Stomach (tissue), 19 donors: ENCODE measurements at regions of chr5 and their contacts with region 1.

Region 1: GRCh38 chr5:135657536-135658310 is 78.9 kb upstream of the CXCL14 start:
- DNase-seq: no peak
- H3K4me3 ChIP-seq: no peak overlapping the region
- H3K27ac ChIP-seq: no peak overlapping the region
- H3K4me1 ChIP-seq: no peaks in the 10 kb centered on the region
- H3K27me3 ChIP-seq: no peaks in the 10 kb centered on the region
- CTCF ChIP-seq: no peak
- EP300 ChIP-seq: no peak
- POLR2A ChIP-seq: no peak

Region 2: GRCh38 chr5:135582099-135582781 is 75.5 kb before region 1 on chr5:
- intact Hi-C with region 1: loop called (anchors 2 kb)
- DNase-seq: no peak
- H3K4me3 ChIP-seq: no peak overlapping the region
- H3K27ac ChIP-seq: no peak overlapping the region
- H3K4me1 ChIP-seq: peaks cover 0 to 14% (median 6%) of the 10 kb centered on the region in 4 donors
- H3K27me3 ChIP-seq: peaks cover 4 to 69% (median 34%) of the 10 kb centered on the region in 3 donors
- CTCF ChIP-seq: no peak
- EP300 ChIP-seq: no peak
- POLR2A ChIP-seq: no peak

Region 3: DNA sequence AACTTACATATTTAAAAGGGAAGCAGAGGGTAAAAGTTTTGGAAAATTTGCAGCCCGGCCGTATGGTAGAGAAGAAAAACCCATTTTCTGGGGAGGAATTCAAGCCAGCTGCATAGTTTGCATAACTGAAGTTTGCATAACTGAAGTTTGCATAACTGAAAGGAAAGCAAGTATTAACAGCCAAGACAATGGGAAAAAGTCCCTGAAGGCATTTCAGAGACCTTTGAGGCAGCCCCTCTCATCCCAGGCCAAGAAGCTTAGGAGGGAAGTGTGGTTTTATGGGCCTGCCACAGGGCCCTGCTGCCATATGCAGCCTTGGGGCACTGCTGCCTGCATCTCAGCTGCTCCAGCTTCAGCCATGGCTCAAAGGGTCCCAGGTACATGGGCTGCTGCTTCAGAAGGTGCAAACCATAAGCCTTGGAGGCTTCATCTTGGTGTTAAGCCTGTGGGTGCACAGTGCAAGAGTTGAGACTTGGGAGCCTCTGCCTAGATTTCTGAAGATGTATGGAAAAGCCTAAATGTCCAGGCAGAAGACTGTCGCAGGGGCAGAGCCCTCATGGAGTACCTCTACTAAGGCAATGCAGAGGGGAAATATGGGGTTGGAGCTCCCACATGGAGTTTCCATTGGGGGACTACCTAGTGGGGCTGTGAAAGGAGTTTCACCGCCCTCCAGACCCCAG is 42.0 kb before region 1 on chr5:
- intact Hi-C with region 1: no loop called
- DNase-seq: no peak
- H3K4me3 ChIP-seq: no peak overlapping the region
- H3K27ac ChIP-seq: no peak overlapping the region
- H3K4me1 ChIP-seq: no peaks in the 10 kb centered on the region
- H3K27me3 ChIP-seq: peaks cover 0 to 3% (median 0%) of the 10 kb centered on the region in 3 donors
- CTCF ChIP-seq: no peak
- EP300 ChIP-seq: no peak
- POLR2A ChIP-seq: no peak